Uterus (tissue), 4 donors: ENCODE measurements at regions of chr7 and their contacts with region 1.

Region 1: GRCh38 chr7:144407266-144407931 is 3.9 kb upstream of the NOBOX start:
- DNase-seq: no peak
- H3K4me3 ChIP-seq: no peak overlapping the region
- H3K27ac ChIP-seq: no peak overlapping the region
- H3K4me1 ChIP-seq: no peaks in the 10 kb centered on the region
- H3K27me3 ChIP-seq: no peaks in the 10 kb centered on the region
- CTCF ChIP-seq: no peak
- POLR2A ChIP-seq: no peak

Region 2: DNA sequence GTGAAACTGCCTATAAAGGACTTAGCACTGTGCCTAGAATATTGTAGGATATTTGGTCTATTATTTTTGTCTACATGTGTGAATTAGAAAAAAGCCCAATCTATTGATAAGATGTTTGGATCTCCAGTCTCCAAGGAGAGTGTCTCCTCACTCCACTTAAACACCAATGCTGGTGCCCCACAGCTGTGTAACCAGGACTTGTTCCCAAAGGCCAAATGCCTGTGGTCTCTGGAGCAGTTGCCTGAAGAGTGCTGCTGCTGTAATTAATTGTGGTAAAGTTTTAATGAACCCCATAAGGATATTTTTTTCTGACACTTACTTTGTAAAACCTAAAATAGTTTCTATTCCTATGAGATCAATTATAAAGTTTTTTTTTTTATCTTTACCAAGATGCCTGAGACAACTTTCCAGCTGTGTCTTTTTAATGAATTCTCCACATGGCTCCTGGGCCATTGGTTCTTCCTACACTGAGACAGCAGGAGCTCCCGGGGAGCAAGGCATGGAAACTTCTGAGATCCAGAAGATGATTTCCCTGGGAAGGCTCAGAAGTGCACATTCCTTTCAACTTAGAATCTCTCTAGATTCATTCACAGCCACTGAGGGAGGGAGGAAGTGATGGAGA is 369.9 kb before region 1 on chr7:
- intact Hi-C with region 1: no loop called
- DNase-seq: no peak
- H3K4me3 ChIP-seq: no peak overlapping the region
- H3K27ac ChIP-seq: no peak overlapping the region
- H3K4me1 ChIP-seq: no peaks in the 10 kb centered on the region
- H3K27me3 ChIP-seq: no peaks in the 10 kb centered on the region
- CTCF ChIP-seq: no peak
- POLR2A ChIP-seq: no peak

Region 3: DNA sequence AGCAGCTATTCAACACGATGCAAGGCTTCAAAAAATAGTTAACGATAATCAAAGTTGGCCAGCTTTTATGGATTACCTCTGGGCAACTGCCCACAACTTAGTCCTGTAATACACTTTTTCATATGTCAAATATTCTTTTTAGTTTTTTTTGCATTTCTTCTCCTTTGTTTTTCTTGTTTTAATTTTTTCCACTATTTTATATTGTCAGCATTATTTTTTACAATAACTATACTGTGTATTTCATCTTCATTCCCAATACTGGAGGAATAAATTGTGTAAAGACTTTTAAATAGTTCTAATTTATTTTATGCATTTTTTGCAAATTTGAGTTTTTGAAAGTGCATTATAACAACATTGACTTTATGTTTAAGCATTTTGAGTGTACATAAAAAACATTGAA is 242.6 kb before region 1 on chr7:
- intact Hi-C with region 1: loop called (anchors 5 kb)
- DNase-seq: no peak
- H3K4me3 ChIP-seq: no peak overlapping the region
- H3K27ac ChIP-seq: no peak overlapping the region
- H3K4me1 ChIP-seq: no peaks in the 10 kb centered on the region
- H3K27me3 ChIP-seq: no peaks in the 10 kb centered on the region
- CTCF ChIP-seq: no peak
- POLR2A ChIP-seq: no peak